Natural killer cell (primary cell): ENCODE measurements at regions of chr16 and their contacts with region 1.

Region 1: DNA sequence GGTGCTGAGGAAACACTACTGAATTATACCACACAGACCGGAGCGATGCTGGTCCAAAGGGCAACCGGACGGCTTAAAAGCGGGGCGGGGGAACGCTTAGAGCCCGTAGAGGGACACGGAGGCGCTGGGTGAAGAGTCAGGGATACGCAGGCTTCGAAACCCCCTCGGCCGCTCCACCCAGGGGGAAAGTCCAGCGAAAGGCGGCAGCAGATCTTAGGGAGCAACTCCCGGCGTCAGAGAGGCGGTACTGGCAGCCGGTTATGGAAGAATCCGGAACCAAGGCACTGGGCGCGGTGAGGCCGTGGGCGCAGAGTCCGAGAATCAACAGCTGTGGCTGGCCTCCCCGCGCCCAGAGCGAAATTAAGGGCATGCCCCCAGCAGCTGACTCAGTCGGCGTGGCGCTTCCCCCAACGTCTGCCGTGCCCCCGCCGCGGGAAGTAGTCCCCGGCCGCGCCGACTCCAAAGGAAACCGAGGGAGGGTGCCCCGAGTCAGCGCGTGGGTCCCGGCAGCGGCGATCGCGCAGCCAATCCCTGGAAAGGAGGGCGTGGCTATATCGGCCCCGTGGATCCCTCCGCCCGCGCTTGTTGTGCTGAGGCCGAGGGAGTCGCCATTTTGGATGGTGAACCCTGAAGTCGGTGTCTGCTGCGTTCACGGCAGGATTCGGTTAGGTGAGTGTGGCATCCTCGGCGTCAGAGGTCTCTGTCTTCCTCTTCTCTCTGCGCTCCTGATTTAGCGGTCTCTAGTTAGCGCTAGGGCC is at the start of gene IST1:
- DNase-seq: peak; percentile 97 to 99
- ATAC-seq: peak; percentile 92 to 98 (median 92)
- H3K4me3 ChIP-seq: peak within 1 kb of the TSS; percentile 68
- H3K4me3 Mint-ChIP-seq: peak within 1 kb of the TSS; percentile 96
- H3K27ac ChIP-seq: peak within 1 kb of the TSS; percentile 87
- H3K27ac Mint-ChIP-seq: peak within 1 kb of the TSS; percentile 95 to 98
- H3K4me1 ChIP-seq: peaks cover 32% of the 10 kb centered on the region
- H3K4me1 Mint-ChIP-seq: peaks cover 25 to 35% of the 10 kb centered on the region in 2 donors
- H3K27me3 ChIP-seq: no peaks in the 10 kb centered on the region
- H3K27me3 Mint-ChIP-seq: no peaks in the 10 kb centered on the region
- CTCF ChIP-seq: no peak
- total RNA-seq, gene IST1: 363 to 391 (median 378) TPM

Region 2: GRCh38 chr16:71626018-71626857 is 268.9 kb before region 1 on chr16 and contains the start of gene MARVELD3:
- intact Hi-C with region 1: no loop called
- DNase-seq: peak in 1 of 2 donors; percentile 31
- ATAC-seq: no peak
- H3K4me3 ChIP-seq: peak within 1 kb of the TSS; percentile 39
- H3K4me3 Mint-ChIP-seq: no peak within 1 kb of the TSS
- H3K27ac ChIP-seq: no peak within 1 kb of the TSS
- H3K27ac Mint-ChIP-seq: no peak within 1 kb of the TSS
- H3K4me1 ChIP-seq: peaks cover 11% of the 10 kb centered on the region
- H3K4me1 Mint-ChIP-seq: peaks cover 7 to 8% of the 10 kb centered on the region in 2 donors
- H3K27me3 ChIP-seq: peaks cover 17% of the 10 kb centered on the region
- H3K27me3 Mint-ChIP-seq: peaks cover 14 to 18% of the 10 kb centered on the region in 2 donors
- CTCF ChIP-seq: no peak
- total RNA-seq, gene MARVELD3: not detected

Region 3: DNA sequence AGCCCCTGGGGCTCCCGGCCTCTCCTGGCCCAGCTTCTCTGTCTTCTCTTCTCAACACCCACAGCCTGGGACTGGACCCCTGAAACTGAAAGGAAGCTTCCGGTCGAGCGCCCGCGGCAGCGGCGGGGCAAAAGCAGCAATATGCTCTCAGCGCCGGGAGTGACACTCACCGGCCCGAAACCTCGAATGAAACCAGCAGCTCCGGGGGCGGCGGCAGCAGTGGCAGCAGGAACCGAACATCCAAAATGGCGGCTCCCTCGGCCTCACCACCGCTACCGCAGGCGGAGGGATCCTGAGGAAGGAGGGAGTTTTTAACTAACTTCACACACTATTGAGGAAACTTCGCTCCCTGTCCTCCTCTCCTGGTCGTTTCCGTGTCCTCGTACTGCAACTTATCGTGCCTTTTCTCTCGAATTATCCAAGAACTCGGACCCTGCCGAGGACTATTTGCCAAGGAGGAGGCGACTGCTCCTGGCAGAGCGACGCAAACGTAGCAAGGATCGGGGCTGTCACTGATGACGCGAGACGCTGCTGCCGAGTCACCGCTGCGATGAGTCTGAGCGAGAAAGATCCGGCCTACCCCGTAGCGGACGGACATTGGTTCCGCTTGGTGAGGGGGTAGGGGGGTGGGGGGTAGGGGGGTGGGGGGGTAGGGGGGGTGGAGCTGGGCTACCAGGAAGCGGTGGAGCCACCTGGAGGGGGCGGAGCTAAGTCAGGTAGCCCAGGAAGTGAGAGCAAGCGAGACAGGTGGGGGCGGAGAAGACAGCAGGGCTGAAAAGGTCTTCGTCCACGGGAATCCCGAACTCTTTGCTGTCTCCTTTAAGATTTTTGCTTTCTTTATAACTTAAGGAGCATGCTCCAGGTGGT is 86.3 kb before region 1 on chr16 and contains the start of gene AP1G1:
- intact Hi-C with region 1: loop called (anchors 1 kb)
- DNase-seq: peak; percentile 86 to 98
- ATAC-seq: peak; percentile 90 to 97 (median 92)
- H3K4me3 ChIP-seq: peak within 1 kb of the TSS; percentile 89
- H3K4me3 Mint-ChIP-seq: peak within 1 kb of the TSS; percentile 90
- H3K27ac ChIP-seq: peak within 1 kb of the TSS; percentile 100
- H3K27ac Mint-ChIP-seq: peak within 1 kb of the TSS; percentile 93 to 95
- H3K4me1 ChIP-seq: peaks cover 22% of the 10 kb centered on the region
- H3K4me1 Mint-ChIP-seq: peaks cover 16 to 30% of the 10 kb centered on the region in 2 donors
- H3K27me3 ChIP-seq: no peaks in the 10 kb centered on the region
- H3K27me3 Mint-ChIP-seq: no peaks in the 10 kb centered on the region
- CTCF ChIP-seq: no peak
- total RNA-seq, gene AP1G1: 176 to 212 (median 188) TPM

Region 4: GRCh38 chr16:71845639-71846430 is 49.3 kb before region 1 on chr16 and contains the start of gene ATXN1L:
- intact Hi-C with region 1: loop called (anchors 5 kb)
- DNase-seq: peak; percentile 96 to 97
- ATAC-seq: peak; percentile 92 to 97 (median 93)
- H3K4me3 ChIP-seq: peak within 1 kb of the TSS; percentile 89
- H3K4me3 Mint-ChIP-seq: peak within 1 kb of the TSS; percentile 94
- H3K27ac ChIP-seq: peak within 1 kb of the TSS; percentile 88
- H3K27ac Mint-ChIP-seq: peak within 1 kb of the TSS; percentile 94 to 97
- H3K4me1 ChIP-seq: peaks cover 13% of the 10 kb centered on the region
- H3K4me1 Mint-ChIP-seq: peaks cover 30 to 37% of the 10 kb centered on the region in 2 donors
- H3K27me3 ChIP-seq: no peaks in the 10 kb centered on the region
- H3K27me3 Mint-ChIP-seq: no peaks in the 10 kb centered on the region
- CTCF ChIP-seq: no peak
- total RNA-seq, gene ATXN1L: 59.7 to 66.9 (median 59.8) TPM

Region 5: DNA sequence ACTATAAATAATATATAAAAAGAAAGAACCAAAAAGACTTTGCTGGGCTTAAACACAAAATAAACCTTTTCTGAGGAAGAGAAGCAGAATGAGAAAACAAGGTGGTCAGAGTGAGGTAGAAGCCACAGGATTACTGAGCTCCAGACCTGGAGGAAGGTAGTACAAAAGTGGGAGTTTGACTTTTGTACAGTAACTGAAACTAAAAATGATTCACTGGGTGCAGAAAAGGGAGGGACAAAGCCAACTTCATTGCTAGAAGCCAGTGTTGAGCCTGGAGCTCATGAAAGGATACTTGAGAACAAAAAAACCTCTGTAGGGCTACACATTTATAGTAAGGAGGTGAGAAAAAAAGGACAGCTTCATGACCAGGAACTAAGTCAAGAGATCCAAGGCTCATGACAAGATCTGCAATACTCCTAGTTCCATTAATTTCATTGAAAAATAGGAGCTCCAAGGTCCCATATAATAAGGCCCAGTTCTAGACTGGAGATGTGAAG is 59.6 kb after region 1 on chr16:
- intact Hi-C with region 1: no loop called
- DNase-seq: no peak
- ATAC-seq: no peak
- H3K4me3 ChIP-seq: no peak overlapping the region
- H3K4me3 Mint-ChIP-seq: no peak overlapping the region
- H3K27ac ChIP-seq: no peak overlapping the region
- H3K27ac Mint-ChIP-seq: no peak overlapping the region
- H3K4me1 ChIP-seq: peaks cover 3% of the 10 kb centered on the region
- H3K4me1 Mint-ChIP-seq: peaks cover 5 to 6% of the 10 kb centered on the region in 2 donors
- H3K27me3 ChIP-seq: no peaks in the 10 kb centered on the region
- H3K27me3 Mint-ChIP-seq: peaks cover 0 to 12% of the 10 kb centered on the region in 2 donors
- CTCF ChIP-seq: no peak

Region 6: DNA sequence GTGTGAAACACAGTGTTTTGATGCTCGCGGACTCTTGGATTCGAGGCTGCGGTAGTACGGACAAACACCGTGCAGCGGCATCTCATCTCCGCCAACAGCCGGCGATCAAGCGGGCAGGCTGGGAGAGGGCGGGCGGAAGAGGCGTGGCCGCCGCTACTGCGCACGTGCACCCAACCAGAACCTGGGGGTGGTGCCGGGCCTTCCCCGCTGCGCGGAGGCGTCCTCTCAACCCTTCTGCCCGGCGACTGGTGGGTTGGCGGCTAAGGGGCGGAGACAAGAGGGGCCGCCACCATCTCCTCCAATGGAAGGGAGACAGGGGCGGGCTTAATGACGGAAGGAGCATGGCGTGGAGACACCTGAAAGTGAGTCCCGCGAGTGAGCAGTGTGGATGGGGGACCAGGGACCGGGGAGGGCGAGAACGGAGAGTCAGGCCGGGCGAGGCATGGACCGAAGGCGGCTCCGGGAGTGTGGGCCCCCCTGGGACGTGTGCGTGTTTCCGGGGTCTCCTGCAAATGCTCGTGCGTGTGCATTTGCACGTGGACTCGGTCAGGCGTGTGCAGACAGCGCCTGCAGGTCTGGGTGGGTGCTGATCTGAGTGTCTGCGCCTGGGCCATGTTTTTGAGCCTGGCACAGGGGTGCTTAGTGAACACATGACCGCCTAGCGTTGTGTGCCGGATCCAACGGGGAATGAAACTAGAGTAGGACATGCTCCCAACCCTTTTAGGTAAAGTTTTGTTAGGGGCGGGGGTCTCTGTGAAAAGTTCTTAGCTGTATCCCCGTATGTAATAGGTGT is 113.5 kb after region 1 on chr16 and contains the start of gene DHODH:
- intact Hi-C with region 1: loop called (anchors 1 kb)
- DNase-seq: peak; percentile 97 to 98
- ATAC-seq: peak; percentile 98 to 100 (median 99)
- H3K4me3 ChIP-seq: peak within 1 kb of the TSS; percentile 69
- H3K4me3 Mint-ChIP-seq: peak within 1 kb of the TSS; percentile 97
- H3K27ac ChIP-seq: peak within 1 kb of the TSS; percentile 28
- H3K27ac Mint-ChIP-seq: peak within 1 kb of the TSS; percentile 80 to 88
- H3K4me1 ChIP-seq: peaks cover 28% of the 10 kb centered on the region
- H3K4me1 Mint-ChIP-seq: peaks cover 12 to 16% of the 10 kb centered on the region in 2 donors
- H3K27me3 ChIP-seq: no peaks in the 10 kb centered on the region
- H3K27me3 Mint-ChIP-seq: no peaks in the 10 kb centered on the region
- CTCF ChIP-seq: no peak
- total RNA-seq, gene DHODH: 3.7 to 6.9 (median 4.7) TPM

Region 7: DNA sequence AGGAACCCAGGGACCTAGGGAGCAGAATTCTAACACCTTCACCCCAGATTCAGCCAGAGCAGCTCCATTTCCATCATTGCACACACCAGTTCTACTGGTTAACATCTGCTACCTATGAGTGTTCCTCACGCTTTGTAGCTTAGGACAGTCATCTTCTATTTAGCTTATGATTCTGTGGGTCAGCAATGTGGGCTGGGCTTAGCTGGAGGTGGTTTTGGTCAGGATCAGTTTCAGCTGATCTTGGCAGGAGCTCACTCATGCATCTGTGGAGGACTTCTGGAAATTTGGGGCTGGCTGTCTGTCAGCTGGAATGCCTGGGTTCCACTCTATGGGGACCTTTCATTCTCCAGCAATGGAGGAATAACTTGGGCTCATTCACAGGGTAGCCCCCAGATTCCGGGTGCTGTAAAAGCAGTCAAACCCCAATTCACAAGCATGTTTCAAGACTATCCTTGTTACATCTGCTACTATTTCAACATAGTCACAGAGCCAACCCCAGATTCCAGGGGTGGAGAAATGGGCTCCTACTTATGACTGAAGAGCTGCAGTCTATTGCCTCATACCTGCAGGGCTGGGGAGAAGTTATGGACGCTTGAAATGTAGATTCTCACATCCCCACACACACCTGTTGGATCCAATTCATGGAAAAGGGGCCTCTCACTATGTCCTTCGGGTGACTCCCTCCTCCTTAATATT is 155.8 kb after region 1 on chr16:
- intact Hi-C with region 1: no loop called
- DNase-seq: no peak
- ATAC-seq: no peak
- H3K4me3 ChIP-seq: no peak overlapping the region
- H3K4me3 Mint-ChIP-seq: no peak overlapping the region
- H3K27ac ChIP-seq: no peak overlapping the region
- H3K27ac Mint-ChIP-seq: no peak overlapping the region
- H3K4me1 ChIP-seq: no peaks in the 10 kb centered on the region
- H3K4me1 Mint-ChIP-seq: no peaks in the 10 kb centered on the region
- H3K27me3 ChIP-seq: no peaks in the 10 kb centered on the region
- H3K27me3 Mint-ChIP-seq: peaks cover 0 to 7% of the 10 kb centered on the region in 2 donors
- CTCF ChIP-seq: no peak